ENCODE measurements at regions of chr3 and their contacts with region 1.

Region 1: DNA sequence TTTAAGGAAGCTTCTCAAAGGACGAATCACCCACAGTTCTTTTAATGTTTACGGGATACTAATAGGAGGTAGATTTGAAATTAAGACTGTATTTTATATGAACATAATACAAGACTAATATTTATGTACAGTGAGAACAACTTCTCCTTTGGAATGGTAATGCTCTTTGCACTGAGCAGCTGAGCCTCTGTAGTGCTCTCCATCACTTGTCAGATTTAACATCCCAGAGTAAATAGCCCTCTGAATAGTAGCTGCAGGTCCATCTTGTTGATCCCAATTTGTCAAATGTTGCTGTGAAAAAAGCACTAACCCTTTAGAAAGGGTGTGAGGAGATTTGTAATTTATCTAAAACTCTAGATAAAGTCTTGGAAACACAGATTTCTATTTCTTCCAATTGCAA is 351.4 kb upstream of the KCNMB2 start:
- DNase-seq: no peak
- H3K4me3 ChIP-seq: no peak overlapping the region
- H3K27ac ChIP-seq: no peak overlapping the region
- H3K4me1 ChIP-seq: no peaks in the 10 kb centered on the region
- CTCF ChIP-seq: no peak

Region 2: DNA sequence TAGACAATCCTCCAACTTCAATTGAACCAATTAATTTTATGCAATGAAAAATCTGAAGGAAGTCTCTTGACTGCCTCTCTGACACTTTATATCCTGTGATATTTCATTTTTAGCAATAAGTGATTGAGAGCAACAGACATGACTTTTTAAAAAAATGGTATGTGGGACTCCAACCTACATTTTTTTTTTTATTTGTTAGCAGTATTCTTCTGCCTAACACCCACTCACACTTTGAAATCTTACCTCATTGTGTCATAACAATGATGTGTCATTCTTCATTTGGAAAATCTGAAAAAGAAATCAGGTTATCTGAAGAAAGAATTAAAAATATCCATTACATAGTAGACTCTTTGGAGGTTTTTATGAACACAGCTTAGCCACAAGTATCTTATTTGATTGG is 189.9 kb before region 1 on chr3:
- CTCF ChIA-PET with region 1: no interaction called
- POLR2A ChIA-PET with region 1: no interaction called
- intact Hi-C with region 1: no loop called
- DNase-seq: no peak
- H3K4me3 ChIP-seq: no peak overlapping the region
- H3K27ac ChIP-seq: no peak overlapping the region
- H3K4me1 ChIP-seq: no peaks in the 10 kb centered on the region
- CTCF ChIP-seq: no peak

Region 3: DNA sequence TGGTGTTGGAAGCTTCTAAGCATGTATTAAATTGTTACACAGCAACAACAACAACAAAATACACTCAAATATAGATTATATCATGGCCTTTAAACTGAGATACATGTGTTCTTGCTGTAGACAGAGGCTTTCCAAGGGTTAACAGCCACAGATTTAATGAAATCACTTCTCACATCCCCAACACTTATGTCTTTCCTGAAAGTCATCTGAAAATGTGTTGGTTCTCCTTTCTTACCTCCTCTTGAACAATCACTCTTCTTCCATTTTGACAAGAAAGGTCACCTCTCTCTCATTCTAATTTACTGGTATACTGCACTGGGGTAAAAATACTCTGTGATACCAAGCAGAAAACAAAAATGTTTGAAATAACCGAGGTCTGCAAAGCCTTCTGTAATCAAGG is 155.9 kb before region 1 on chr3:
- CTCF ChIA-PET with region 1: no interaction called
- POLR2A ChIA-PET with region 1: no interaction called
- intact Hi-C with region 1: no loop called
- DNase-seq: no peak
- H3K4me3 ChIP-seq: no peak overlapping the region
- H3K27ac ChIP-seq: no peak overlapping the region
- H3K4me1 ChIP-seq: no peaks in the 10 kb centered on the region
- CTCF ChIP-seq: no peak

Region 4: GRCh38 chr3:178146406-178146831 is 38.4 kb before region 1 on chr3:
- CTCF ChIA-PET with region 1: no interaction called
- POLR2A ChIA-PET with region 1: no interaction called
- intact Hi-C with region 1: no loop called
- DNase-seq: no peak
- H3K4me3 ChIP-seq: no peak overlapping the region
- H3K27ac ChIP-seq: no peak overlapping the region
- H3K4me1 ChIP-seq: no peaks in the 10 kb centered on the region
- CTCF ChIP-seq: no peak

Region 5: DNA sequence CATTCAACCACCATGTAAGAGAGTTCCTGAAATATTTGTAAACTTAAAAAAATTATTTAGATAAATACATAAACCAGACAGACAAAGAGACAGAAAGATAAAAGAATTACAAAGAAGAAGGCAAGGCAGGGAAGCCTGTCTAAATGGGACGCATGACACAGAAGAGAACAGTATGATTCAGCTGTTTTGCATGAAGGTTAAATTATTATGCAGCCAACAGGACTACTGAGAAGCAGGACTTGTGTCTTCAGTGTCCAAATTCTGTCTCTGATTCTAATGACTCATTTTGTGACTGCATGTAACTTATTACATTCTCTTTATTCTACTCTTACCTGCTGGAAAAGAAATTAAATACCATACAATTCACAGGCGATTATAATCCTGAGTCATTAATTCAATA is 11.0 kb after region 1 on chr3:
- CTCF ChIA-PET with region 1: no interaction called
- POLR2A ChIA-PET with region 1: no interaction called
- intact Hi-C with region 1: loop called (anchors 1 kb)
- DNase-seq: no peak
- H3K4me3 ChIP-seq: no peak overlapping the region
- H3K27ac ChIP-seq: no peak overlapping the region
- H3K4me1 ChIP-seq: no peaks in the 10 kb centered on the region
- CTCF ChIP-seq: no peak

Measured in OCI-LY7 (cell line).